Activated T-helper 2 cell treated with anti-CD3 and anti-CD28 coated beads, Interferon-gamma antibody, Interleukin-2, Interleukin-4, amounts not matched to agents 10 μg/mL and 5 μg/mL and 100 μg/mL, durations not matched to agents 14 hours and 24 hours and 36 hours (primary cell): ENCODE measurements at regions of chr7 and their contacts with region 1.

Region 1: DNA sequence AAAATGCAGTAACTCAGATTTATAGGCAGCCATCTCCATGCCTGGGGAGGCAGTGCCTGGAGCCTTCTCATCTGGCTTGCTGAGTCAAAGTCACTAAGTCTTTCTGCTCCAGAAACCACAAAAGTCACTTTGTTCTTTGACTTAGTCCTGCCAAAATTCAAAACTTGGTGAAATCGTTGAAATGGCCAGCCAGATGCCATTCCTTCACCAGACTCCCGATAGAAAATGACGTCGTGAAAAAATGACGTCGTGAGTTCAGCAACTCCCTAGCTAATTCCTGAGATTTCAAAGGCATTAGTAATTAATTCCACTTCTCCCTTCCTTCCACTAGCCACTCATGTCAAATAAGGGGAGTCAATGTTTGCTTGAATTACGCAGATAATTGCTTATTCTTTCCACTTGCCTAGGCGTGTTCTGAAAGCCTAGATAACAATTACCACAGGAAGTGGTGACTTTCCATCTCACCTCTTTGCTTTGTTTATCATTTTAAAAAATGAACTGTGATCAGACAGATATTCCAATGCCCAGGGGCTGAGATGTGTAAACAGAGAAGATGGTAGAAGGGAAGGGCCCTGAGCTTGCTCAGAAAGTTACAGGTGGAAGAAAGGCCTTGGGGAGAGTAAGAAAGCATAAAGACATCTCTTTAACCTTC is 48.5 kb upstream of the OSBPL3 start:
- DNase-seq: peak; percentile 32
- H3K4me3 Mint-ChIP-seq: peak overlapping the region; percentile 32
- H3K27ac Mint-ChIP-seq: peak overlapping the region; percentile 82
- H3K4me1 Mint-ChIP-seq: peaks cover 51% of the 10 kb centered on the region
- H3K27me3 Mint-ChIP-seq: peaks cover 17% of the 10 kb centered on the region

Region 2: DNA sequence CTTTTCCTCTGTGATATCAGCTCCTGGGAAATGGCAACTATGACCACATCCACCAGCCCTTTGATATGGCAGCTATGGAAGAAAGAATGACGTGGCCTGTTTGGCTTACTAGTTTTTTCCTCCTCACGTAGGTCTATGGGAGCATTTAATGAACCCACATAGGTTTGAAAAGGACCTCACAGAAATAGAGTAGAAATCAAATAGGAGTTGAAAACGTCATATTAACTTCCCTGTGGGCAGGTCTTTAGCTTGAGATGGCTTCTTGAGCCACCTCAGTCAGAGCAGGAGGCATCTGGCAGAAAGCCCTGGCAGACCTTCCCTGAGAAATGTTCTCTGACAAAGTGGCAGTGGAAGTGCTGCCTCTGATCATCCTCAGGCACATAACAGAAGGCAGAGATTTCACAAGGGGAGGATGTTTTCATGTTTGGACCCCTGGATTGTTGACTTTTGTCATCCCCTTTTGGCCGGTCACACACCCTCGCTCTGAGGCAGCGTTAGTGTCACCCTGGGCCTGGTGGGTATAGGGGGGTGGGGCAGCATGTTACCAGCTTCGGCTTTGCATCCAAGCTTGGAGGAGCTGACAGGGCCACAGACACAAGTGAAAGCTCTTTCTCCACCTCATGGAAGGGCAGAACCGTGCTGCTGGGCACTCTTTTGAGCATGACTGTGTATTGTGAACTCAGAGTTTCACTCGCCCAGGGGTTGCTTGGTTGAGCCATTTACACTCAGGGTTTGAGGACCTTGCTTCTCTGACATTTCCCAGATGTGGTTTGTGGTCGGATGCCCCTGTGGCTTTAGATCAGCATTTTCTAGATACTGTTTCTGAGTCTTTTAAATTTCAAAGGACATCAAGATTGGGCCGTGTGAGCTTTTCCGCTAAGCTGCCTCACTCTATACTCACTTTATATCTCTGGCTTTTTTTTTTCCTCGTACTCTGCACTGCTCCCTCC is 1134.3 kb before region 1 on chr7:
- intact Hi-C with region 1: loop called (anchors 5 kb)
- DNase-seq: peak; percentile 52
- H3K4me3 Mint-ChIP-seq: peak overlapping the region; percentile 34
- H3K27ac Mint-ChIP-seq: peak overlapping the region; percentile 91
- H3K4me1 Mint-ChIP-seq: peaks cover 36% of the 10 kb centered on the region
- H3K27me3 Mint-ChIP-seq: peaks cover 16% of the 10 kb centered on the region

Region 3: GRCh38 chr7:24921362-24921679 is 107.2 kb before region 1 on chr7:
- intact Hi-C with region 1: loop called (anchors 2 kb)
- DNase-seq: no peak
- H3K4me3 Mint-ChIP-seq: peak overlapping the region; percentile 41
- H3K27ac Mint-ChIP-seq: peak overlapping the region; percentile 91
- H3K4me1 Mint-ChIP-seq: peaks cover 93% of the 10 kb centered on the region
- H3K27me3 Mint-ChIP-seq: no peaks in the 10 kb centered on the region

Region 4: DNA sequence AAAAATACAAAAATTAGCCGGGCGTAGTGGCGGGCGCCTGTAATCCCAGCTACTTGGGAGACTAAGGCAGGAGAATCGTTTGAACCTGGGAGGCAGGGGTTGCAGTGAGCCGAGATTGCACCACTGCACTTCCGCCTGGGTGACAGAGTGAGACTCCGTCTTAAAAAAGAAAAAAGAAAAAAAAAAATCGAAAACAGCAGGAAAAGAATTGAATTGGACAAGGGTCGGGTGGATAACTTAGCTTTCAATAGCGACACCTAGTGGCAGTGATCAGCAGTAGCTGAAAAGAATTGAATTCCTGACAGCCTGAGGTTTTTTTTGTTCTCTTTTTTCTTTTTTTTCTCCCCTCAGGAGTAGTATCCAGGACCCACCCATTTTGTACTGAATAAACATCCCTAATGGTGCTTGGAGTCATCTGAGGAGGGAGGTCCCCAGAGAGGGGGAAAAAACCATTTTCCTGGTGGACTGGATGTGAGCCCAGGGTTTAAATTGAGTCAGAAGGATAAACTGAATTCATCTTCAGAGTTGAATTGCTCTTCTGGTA is 41.5 kb after region 1 on chr7:
- intact Hi-C with region 1: loop called (anchors 2 kb)
- DNase-seq: peak; percentile 20
- H3K4me3 Mint-ChIP-seq: no peak overlapping the region
- H3K27ac Mint-ChIP-seq: no peak overlapping the region
- H3K4me1 Mint-ChIP-seq: peaks cover 29% of the 10 kb centered on the region
- H3K27me3 Mint-ChIP-seq: no peaks in the 10 kb centered on the region